Motor neuron (in vitro differentiated cells): ENCODE measurements at regions of chr5 and their contacts with region 1.

Region 1: GRCh38 chr5:126544087-126544740 is 50.8 kb downstream of the ALDH7A1 start:
- ATAC-seq: peak in 3 of 8 experiments; percentile 44 to 68 (median 49)
- H3K4me3 ChIP-seq: no peak overlapping the region
- H3K27ac ChIP-seq: no peak overlapping the region
- H3K4me1 ChIP-seq: no peaks in the 10 kb centered on the region

Region 2: GRCh38 chr5:126339215-126339805 is 204.9 kb before region 1 on chr5:
- in situ Hi-C with region 1: loop called in 3 of 9 experiments (anchors 10 to 25 kb)
- ATAC-seq: peak in 4 of 8 experiments; percentile 17 to 68 (median 55)
- H3K4me3 ChIP-seq: no peak overlapping the region
- H3K27ac ChIP-seq: no peak overlapping the region
- H3K4me1 ChIP-seq: peaks cover 28 to 38% of the 10 kb centered on the region in 2 donors

Region 3: DNA sequence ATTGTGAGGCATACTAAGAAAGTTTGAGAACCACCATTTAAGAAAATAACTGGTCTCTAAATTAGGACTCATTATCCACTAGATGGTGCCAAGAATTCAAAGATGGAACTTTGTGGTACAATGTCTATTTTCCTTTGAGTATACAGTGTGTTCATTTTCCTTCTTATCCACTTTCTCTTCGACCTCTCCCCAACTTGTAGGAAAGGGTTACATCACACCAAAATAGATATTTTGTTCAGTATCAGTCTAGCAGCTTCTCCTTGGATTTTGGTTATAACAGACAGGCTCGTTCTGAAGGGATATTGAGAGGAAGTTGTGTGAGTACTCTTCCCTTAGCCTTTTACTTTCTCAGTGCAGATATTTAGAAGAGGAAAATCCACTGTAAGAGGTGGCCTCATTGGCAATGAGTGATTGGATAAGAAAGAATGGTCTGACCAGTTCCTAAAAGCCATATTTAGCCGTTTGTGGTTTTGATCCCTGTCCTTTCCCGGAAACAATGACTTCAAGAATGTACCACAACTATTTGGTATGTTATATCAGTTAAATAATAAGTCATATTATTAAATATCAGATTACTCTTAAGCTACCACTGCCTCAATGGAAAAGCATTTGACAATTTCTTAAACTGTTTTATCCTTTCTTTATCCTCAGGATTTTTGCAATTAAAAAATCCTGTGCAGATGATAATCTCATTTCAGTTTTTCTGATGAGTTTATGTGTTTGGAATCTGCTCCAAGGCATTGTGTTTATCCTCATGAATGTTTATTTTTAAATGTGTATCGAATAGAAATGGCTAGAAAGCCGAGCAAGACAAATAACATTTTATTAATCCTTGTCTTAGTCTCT is 190.0 kb before region 1 on chr5:
- in situ Hi-C with region 1: loop called in 7 of 9 experiments (anchors 10 to 25 kb)
- ATAC-seq: peak in 4 of 8 experiments; percentile 70 to 91 (median 80)
- H3K4me3 ChIP-seq: no peak overlapping the region
- H3K27ac ChIP-seq: no peak overlapping the region
- H3K4me1 ChIP-seq: peaks cover 12 to 13% of the 10 kb centered on the region in 2 donors